ENCODE measurements at regions of chr20 and their contacts with region 1.

Region 1: GRCh38 chr20:34001378-34001777 is 7.7 kb downstream of the RALY start:
- DNase-seq: no peak
- ATAC-seq: peak in 1 of 2 donors; percentile 47
- H3K4me3 ChIP-seq: no peak overlapping the region
- H3K27ac ChIP-seq: no peak overlapping the region
- H3K4me1 ChIP-seq: peaks cover 82% of the 10 kb centered on the region
- H3K27me3 ChIP-seq: no peaks in the 10 kb centered on the region
- CTCF ChIP-seq: no peak

Region 2: DNA sequence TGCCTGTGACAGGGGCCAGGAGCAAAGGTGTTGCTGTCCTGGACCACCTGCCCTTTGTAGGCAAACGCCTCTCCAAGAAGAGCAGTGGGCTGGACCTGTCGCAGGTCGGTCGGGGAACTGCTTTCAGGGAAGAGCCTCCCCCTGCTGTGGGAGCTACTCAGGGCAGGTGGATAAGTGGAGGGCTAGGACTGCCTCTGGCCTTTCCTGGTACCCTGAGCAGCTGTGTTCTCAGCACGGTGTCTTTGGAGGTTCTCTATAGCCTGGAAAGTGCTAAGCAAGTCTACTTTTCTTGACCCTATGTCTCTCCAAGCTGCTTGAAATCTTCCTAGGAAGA is 683.3 kb before region 1 on chr20:
- intact Hi-C with region 1: no loop called
- DNase-seq: no peak
- ATAC-seq: no peak
- H3K4me3 ChIP-seq: no peak overlapping the region
- H3K27ac ChIP-seq: no peak overlapping the region
- H3K4me1 ChIP-seq: no peaks in the 10 kb centered on the region
- H3K27me3 ChIP-seq: peaks cover under 1% of the 10 kb centered on the region
- CTCF ChIP-seq: no peak

Region 3: DNA sequence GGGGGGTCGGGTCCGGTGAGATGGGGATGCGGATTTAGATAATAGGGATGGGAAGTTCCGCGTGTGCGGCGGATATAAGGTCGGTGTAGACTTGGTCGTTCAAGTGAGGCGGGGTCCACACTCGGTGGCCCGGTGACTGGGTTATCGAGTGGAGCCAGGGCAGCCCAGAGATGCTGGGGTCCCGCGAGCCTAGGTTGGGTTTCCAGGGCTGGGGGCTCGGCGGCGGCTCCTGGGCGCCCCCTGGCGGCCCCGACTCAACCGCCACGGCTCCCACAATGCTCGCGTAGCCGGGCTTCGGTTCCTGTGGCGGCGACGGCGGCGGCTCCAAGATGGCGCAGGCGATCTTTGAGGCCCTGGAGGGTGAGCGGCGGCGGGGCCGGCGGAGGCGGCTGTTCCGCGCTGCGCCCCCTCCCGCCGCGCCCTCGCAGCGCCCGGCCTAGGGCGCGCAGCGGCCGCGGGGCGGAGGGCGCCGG is 269.6 kb before region 1 on chr20 and contains the start of gene ZNF341:
- intact Hi-C with region 1: no loop called
- DNase-seq: peak; percentile 95
- ATAC-seq: peak; percentile 88 to 93
- H3K4me3 ChIP-seq: peak within 1 kb of the TSS; percentile 62
- H3K27ac ChIP-seq: peak within 1 kb of the TSS; percentile 92
- H3K4me1 ChIP-seq: peaks cover 26% of the 10 kb centered on the region
- H3K27me3 ChIP-seq: no peaks in the 10 kb centered on the region
- CTCF ChIP-seq: peak; percentile 87
- total RNA-seq, gene ZNF341: 5.6 TPM

Region 4: DNA sequence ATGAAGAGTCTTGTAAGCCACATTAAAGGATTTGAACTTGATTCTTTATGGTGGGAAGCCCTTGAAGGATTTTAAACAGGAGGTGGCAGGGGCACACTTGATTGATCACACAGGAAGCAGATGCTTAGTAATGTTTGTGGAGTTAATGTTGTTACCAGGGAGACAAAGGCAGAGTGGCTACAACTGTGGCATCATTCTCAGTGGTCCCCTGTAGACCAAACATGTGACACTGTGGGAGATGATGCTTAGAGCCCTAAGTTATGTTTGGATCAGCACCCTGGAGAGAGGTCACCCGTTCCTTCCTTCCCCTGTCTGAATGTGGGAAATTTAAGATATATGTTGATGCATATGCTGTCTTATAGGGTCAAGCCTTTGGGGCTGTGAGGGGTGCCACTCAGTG is 57.5 kb after region 1 on chr20:
- intact Hi-C with region 1: loop called (anchors 10 kb)
- DNase-seq: no peak
- ATAC-seq: no peak
- H3K4me3 ChIP-seq: no peak overlapping the region
- H3K27ac ChIP-seq: no peak overlapping the region
- H3K4me1 ChIP-seq: peaks cover 34% of the 10 kb centered on the region
- H3K27me3 ChIP-seq: no peaks in the 10 kb centered on the region
- CTCF ChIP-seq: no peak

Region 5: GRCh38 chr20:34165018-34165619 is 163.7 kb after region 1 on chr20:
- intact Hi-C with region 1: no loop called
- DNase-seq: no peak
- ATAC-seq: no peak
- H3K4me3 ChIP-seq: no peak overlapping the region
- H3K27ac ChIP-seq: no peak overlapping the region
- H3K4me1 ChIP-seq: peaks cover 7% of the 10 kb centered on the region
- H3K27me3 ChIP-seq: no peaks in the 10 kb centered on the region
- CTCF ChIP-seq: no peak

Measured in lower lobe of right lung (tissue), 2 donors.